ENCODE measurements at regions of chr12 and their contacts with region 1.

Region 1: GRCh38 chr12:31589904-31590641 is 863 bp downstream of the DENND5B start:
- DNase-seq: peak; percentile 53 to 69
- ATAC-seq: peak; percentile 65
- H3K4me3 ChIP-seq: peak overlapping the region; percentile 73 to 94 (median 86)
- H3K27ac ChIP-seq: peak overlapping the region; percentile 90 to 98 (median 94)
- H3K4me1 ChIP-seq: peaks cover 23 to 34% of the 10 kb centered on the region in 2 donors
- H3K27me3 ChIP-seq: no peaks in the 10 kb centered on the region
- CTCF ChIP-seq: no peak
- POLR2A ChIP-seq: peak; percentile 43 to 61

Region 2: DNA sequence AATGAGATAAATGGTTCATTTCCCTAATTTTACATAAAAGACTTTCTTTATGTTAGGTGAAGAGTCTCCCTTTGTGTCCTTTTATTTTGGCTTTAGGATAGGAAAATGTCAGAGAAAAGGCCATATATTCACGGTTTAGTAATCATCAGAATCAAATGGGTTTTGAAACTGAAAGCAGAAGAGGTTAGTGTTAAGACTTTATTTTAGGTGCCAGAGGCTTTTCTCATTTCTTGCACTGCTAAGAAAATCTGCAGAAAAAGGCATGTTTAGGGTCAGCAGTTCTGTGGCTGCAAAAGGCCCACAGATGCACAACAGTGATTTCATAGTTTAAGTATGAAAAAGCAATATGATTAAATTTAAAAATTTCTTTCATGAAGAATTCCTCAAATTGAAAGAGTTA is 183.7 kb before region 1 on chr12:
- in situ Hi-C with region 1: no loop called
- intact Hi-C with region 1: loop called (anchors 5 kb)
- DNase-seq: no peak
- ATAC-seq: no peak
- H3K4me3 ChIP-seq: no peak overlapping the region
- H3K27ac ChIP-seq: no peak overlapping the region
- H3K4me1 ChIP-seq: no peaks in the 10 kb centered on the region
- H3K27me3 ChIP-seq: no peaks in the 10 kb centered on the region
- CTCF ChIP-seq: no peak
- POLR2A ChIP-seq: no peak

Region 3: DNA sequence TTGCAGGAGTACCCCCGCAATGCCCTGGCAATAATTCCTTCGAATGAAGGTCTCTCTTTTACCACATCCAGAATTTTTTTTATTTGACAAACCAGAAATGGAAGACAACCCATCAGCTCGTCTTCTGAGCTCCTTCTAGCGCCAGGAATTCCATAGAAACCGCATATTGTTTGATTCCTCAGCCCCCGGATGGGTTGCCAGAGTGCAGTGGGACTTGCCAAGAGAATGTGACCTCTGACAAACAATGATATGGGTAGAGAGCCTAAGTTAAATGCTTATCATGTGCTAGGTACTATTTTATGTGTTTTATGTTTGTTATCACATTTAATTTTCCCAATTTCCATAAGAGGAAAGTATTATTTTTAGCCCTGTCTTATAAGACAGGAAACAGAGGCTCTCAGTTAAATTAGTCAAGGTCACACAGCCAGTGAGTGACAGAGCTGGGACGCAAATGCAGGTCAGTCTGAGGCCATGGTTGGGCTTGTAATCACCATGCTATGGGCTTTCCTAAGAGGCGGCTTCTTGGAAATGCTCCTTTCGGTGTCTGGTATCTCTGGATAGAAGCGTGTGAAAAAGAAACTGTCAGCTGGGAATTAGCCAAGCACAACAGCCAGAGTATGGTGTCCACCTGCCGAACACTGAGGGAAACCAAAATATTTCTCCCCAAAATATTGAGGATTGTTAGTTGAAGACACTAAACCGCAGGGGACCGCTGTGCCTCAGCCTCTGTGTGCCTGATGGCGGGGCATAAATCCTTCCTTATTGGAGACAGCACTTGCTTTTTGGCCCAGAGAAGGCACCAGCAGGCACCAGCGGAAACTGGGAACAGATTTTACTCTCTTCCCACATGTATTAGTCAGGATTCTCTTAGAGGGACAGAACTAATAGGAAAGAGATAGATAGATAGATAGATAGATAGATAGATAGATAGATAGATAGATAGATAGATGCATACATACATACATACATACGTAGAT is 40.0 kb after region 1 on chr12:
- in situ Hi-C with region 1: no loop called
- intact Hi-C with region 1: loop called (anchors 5 kb)
- DNase-seq: peak; percentile 32 to 48
- ATAC-seq: peak; percentile 89 to 98
- H3K4me3 ChIP-seq: peak overlapping the region in 2 of 4 donors; percentile 28 to 46
- H3K27ac ChIP-seq: peak overlapping the region; percentile 53 to 66 (median 57)
- H3K4me1 ChIP-seq: peaks cover 10 to 12% of the 10 kb centered on the region in 2 donors
- H3K27me3 ChIP-seq: no peaks in the 10 kb centered on the region
- CTCF ChIP-seq: no peak
- POLR2A ChIP-seq: no peak

Region 4: GRCh38 chr12:31728917-31729640 is 139.0 kb after region 1 on chr12 and contains the start of gene AMN1:
- in situ Hi-C with region 1: no loop called
- intact Hi-C with region 1: loop called (anchors 5 kb)
- DNase-seq: peak; percentile 94 to 99
- ATAC-seq: peak; percentile 88 to 91
- H3K4me3 ChIP-seq: peak within 1 kb of the TSS; percentile 72 to 89 (median 79)
- H3K27ac ChIP-seq: peak within 1 kb of the TSS; percentile 91 to 97 (median 94)
- H3K4me1 ChIP-seq: peaks cover 50 to 54% of the 10 kb centered on the region in 2 donors
- H3K27me3 ChIP-seq: no peaks in the 10 kb centered on the region
- CTCF ChIP-seq: peak in 1 of 5 experiments; percentile 32
- POLR2A ChIP-seq: peak; percentile 75 to 92
- total RNA-seq, gene AMN1: 14.9 to 27.2 (median 18.6) TPM